IMR-90 (cell line): ENCODE measurements at regions of chr2 and their contacts with region 1.

Region 1: GRCh38 chr2:218547978-218548377 is 20.2 kb downstream of the USP37 start:
- DNase-seq: no peak
- ATAC-seq: no peak
- H3K4me3 ChIP-seq: no peak overlapping the region
- H3K27ac ChIP-seq: no peak overlapping the region
- H3K4me1 ChIP-seq: no peaks in the 10 kb centered on the region
- H3K27me3 ChIP-seq: no peaks in the 10 kb centered on the region
- CTCF ChIP-seq: no peak
- POLR2A ChIP-seq: no peak
- RAD21 ChIP-seq: no peak

Region 2: DNA sequence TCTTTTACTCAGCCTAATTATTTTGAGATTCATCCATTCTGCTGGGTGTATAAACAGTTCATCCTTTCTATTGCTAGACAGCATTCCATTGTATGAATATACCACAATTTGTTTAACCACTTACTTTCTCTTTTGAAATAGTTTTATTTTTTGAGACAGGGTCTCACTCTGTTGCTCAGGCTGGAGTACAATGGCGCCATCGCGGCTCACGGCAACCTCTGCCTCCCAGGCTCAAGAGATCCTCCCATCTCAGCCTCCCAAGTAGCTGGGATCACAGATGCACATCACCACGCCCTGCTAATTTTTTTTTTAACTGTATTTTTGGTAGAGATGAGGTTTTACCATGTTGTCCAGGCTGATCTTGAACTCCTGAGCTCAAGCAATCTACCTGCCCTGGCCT is 34.3 kb before region 1 on chr2:
- CTCF ChIA-PET with region 1: no interaction called
- POLR2A ChIA-PET with region 1: no interaction called
- dilution Hi-C with region 1: no loop called
- in situ Hi-C with region 1: no loop called
- intact Hi-C with region 1: loop called (anchors 5 kb)
- DNase-seq: peak; percentile 19
- ATAC-seq: peak; percentile 70
- H3K4me3 ChIP-seq: no peak overlapping the region
- H3K27ac ChIP-seq: no peak overlapping the region
- H3K4me1 ChIP-seq: no peaks in the 10 kb centered on the region
- H3K27me3 ChIP-seq: no peaks in the 10 kb centered on the region
- CTCF ChIP-seq: no peak
- POLR2A ChIP-seq: no peak
- RAD21 ChIP-seq: no peak

Region 3: DNA sequence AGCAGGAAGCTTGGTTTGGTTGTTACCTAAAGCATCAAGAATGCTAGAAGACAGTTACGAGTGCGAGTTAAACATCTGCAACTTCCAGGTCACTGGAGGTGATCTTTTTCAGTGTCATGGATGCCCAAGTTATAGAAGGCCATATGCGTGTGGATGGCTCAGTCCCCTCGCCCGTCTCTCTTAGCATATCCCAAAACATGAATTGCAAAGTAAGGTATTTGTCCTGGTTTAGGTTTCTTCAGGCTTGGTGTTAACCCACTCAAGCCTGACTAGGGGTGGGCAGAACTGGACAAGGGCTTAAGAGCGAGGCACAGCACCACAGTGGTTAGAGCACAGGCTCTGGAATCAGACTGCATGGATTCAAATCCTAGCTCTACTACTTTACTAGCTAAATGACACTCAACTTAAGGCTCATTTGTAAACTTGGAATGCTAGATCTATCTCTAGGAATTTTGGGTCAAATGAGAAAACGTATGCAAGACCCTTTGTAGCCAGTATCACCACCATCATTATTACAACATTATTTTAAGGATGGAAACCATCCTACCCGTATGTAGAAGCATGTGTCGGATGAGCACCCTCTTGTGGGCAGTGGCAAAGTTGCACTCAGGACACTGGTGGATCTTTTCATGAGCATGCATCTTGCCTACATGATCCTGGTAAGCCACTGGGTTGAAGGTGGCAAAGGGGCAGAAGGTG is 100.3 kb after region 1 on chr2:
- CTCF ChIA-PET with region 1: no interaction called
- POLR2A ChIA-PET with region 1: no interaction called
- dilution Hi-C with region 1: no loop called
- in situ Hi-C with region 1: no loop called
- intact Hi-C with region 1: no loop called
- DNase-seq: peak; percentile 70
- ATAC-seq: peak; percentile 96
- H3K4me3 ChIP-seq: no peak overlapping the region
- H3K27ac ChIP-seq: no peak overlapping the region
- H3K4me1 ChIP-seq: no peaks in the 10 kb centered on the region
- H3K27me3 ChIP-seq: no peaks in the 10 kb centered on the region
- CTCF ChIP-seq: peak; percentile 83
- POLR2A ChIP-seq: no peak
- RAD21 ChIP-seq: peak; percentile 84